Activated B cell treated with CpG ODN at 0.5 μM for 24 hours (primary cell): ENCODE measurements at regions of chr1 and their contacts with region 1.

Region 1: GRCh38 chr1:113783254-113784099 is 24.2 kb upstream of the PHTF1 start:
- DNase-seq: no peak
- ATAC-seq: peak; percentile 99
- H3K4me3 Mint-ChIP-seq: peak overlapping the region; percentile 5
- H3K27ac Mint-ChIP-seq: peak overlapping the region; percentile 59
- H3K4me1 Mint-ChIP-seq: peaks cover 32% of the 10 kb centered on the region
- H3K27me3 Mint-ChIP-seq: no peaks in the 10 kb centered on the region
- CTCF ChIP-seq: no peak

Region 2: GRCh38 chr1:113768901-113769600 is 14.4 kb before region 1 on chr1:
- CTCF ChIA-PET with region 1: interaction called, 3 read pairs
- POLR2A ChIA-PET with region 1: interaction called, 3 read pairs
- intact Hi-C with region 1: loop called (anchors 2 kb)
- DNase-seq: no peak
- ATAC-seq: no peak
- H3K4me3 Mint-ChIP-seq: no peak overlapping the region
- H3K27ac Mint-ChIP-seq: peak overlapping the region; percentile 62
- H3K4me1 Mint-ChIP-seq: peaks cover 12% of the 10 kb centered on the region
- H3K27me3 Mint-ChIP-seq: no peaks in the 10 kb centered on the region
- CTCF ChIP-seq: no peak

Region 3: GRCh38 chr1:113793878-113794834 is 10.7 kb after region 1 on chr1:
- CTCF ChIA-PET with region 1: no interaction called
- POLR2A ChIA-PET with region 1: no interaction called
- intact Hi-C with region 1: loop called (anchors 1 kb)
- DNase-seq: no peak
- ATAC-seq: no peak
- H3K4me3 Mint-ChIP-seq: no peak overlapping the region
- H3K27ac Mint-ChIP-seq: no peak overlapping the region
- H3K4me1 Mint-ChIP-seq: peaks cover 27% of the 10 kb centered on the region
- H3K27me3 Mint-ChIP-seq: no peaks in the 10 kb centered on the region
- CTCF ChIP-seq: no peak